ENCODE measurements at regions of chr1 and their contacts with region 1.

Region 1: GRCh38 chr1:221315330-221315729 is 426.6 kb downstream of the DUSP10 start:
- DNase-seq: peak; percentile 82
- H3K4me3 Mint-ChIP-seq: peak overlapping the region; percentile 7
- H3K27ac Mint-ChIP-seq: peak overlapping the region; percentile 59
- H3K4me1 Mint-ChIP-seq: peaks cover 29% of the 10 kb centered on the region
- H3K27me3 Mint-ChIP-seq: no peaks in the 10 kb centered on the region
- CTCF ChIP-seq: no peak

Region 2: GRCh38 chr1:220957233-220957605 is 358.1 kb before region 1 on chr1:
- CTCF ChIA-PET with region 1: interaction called, 3 read pairs
- POLR2A ChIA-PET with region 1: no interaction called
- intact Hi-C with region 1: loop called (anchors 1 kb)
- DNase-seq: peak; percentile 97
- H3K4me3 Mint-ChIP-seq: peak overlapping the region; percentile 33
- H3K27ac Mint-ChIP-seq: peak overlapping the region; percentile 89
- H3K4me1 Mint-ChIP-seq: peaks cover 21% of the 10 kb centered on the region
- H3K27me3 Mint-ChIP-seq: no peaks in the 10 kb centered on the region
- CTCF ChIP-seq: no peak

Region 3: GRCh38 chr1:221203224-221204054 is 111.9 kb before region 1 on chr1:
- CTCF ChIA-PET with region 1: no interaction called
- POLR2A ChIA-PET with region 1: no interaction called
- intact Hi-C with region 1: no loop called
- DNase-seq: peak; percentile 94
- H3K4me3 Mint-ChIP-seq: no peak overlapping the region
- H3K27ac Mint-ChIP-seq: no peak overlapping the region
- H3K4me1 Mint-ChIP-seq: peaks cover 6% of the 10 kb centered on the region
- H3K27me3 Mint-ChIP-seq: no peaks in the 10 kb centered on the region
- CTCF ChIP-seq: peak; percentile 99

Region 4: GRCh38 chr1:221294244-221294643 is 21.1 kb before region 1 on chr1:
- CTCF ChIA-PET with region 1: interaction called, 4 read pairs
- POLR2A ChIA-PET with region 1: interaction called, 10 read pairs
- intact Hi-C with region 1: loop called (anchors 2 kb)
- DNase-seq: peak; percentile 98
- H3K4me3 Mint-ChIP-seq: no peak overlapping the region
- H3K27ac Mint-ChIP-seq: no peak overlapping the region
- H3K4me1 Mint-ChIP-seq: no peaks in the 10 kb centered on the region
- H3K27me3 Mint-ChIP-seq: no peaks in the 10 kb centered on the region
- CTCF ChIP-seq: no peak

Region 5: DNA sequence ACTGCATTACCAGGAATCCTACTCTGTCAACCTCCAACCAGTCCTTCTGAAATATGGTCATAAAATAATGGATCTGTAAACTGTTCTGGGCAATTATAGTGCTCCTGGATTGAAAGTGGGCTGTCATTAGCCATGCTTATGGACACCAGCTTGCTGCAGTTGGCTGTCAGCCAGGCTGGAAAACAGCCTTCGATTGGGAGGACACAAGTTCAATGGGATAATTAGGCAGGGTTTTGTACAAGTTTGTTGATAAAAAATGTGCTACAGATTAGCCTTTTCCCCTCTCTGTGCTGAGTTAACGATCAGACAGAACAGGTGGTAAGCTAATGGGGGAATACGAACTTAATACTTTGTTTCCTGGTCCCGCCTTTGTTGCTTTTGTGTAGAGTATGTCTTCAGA is 12.6 kb after region 1 on chr1:
- CTCF ChIA-PET with region 1: interaction called, 5 read pairs
- POLR2A ChIA-PET with region 1: interaction called, 12 read pairs
- intact Hi-C with region 1: no loop called
- DNase-seq: no peak
- H3K4me3 Mint-ChIP-seq: no peak overlapping the region
- H3K27ac Mint-ChIP-seq: no peak overlapping the region
- H3K4me1 Mint-ChIP-seq: no peaks in the 10 kb centered on the region
- H3K27me3 Mint-ChIP-seq: no peaks in the 10 kb centered on the region
- CTCF ChIP-seq: no peak

Region 6: DNA sequence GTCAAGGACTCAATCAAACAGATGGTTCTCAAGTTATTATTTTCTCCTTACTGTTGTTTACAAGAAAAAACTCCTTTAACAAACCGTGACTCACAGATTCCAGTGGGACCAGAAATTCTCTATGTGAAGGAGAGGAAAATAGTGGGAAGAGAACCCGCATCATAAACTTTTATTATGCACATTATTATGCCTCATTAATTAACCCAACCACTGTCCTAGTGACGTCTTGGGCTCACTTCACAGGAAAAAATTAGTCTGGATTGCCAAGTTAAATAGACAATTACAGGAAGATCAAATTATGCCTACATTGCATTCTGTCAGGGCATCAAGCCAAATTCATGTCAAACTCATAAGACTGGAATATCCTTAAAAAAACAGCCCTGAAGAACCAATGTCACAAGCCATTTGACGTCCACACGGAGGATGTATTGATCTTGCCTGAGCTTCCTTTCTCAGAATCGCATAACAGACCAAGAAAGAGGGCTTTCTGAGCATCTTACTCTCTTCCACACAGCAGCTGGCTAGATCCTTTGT is 78.7 kb after region 1 on chr1:
- CTCF ChIA-PET with region 1: no interaction called
- POLR2A ChIA-PET with region 1: interaction called, 5 read pairs
- intact Hi-C with region 1: loop called (anchors 1 kb)
- DNase-seq: peak; percentile 88
- H3K4me3 Mint-ChIP-seq: no peak overlapping the region
- H3K27ac Mint-ChIP-seq: peak overlapping the region; percentile 55
- H3K4me1 Mint-ChIP-seq: peaks cover 50% of the 10 kb centered on the region
- H3K27me3 Mint-ChIP-seq: no peaks in the 10 kb centered on the region
- CTCF ChIP-seq: no peak

Region 7: DNA sequence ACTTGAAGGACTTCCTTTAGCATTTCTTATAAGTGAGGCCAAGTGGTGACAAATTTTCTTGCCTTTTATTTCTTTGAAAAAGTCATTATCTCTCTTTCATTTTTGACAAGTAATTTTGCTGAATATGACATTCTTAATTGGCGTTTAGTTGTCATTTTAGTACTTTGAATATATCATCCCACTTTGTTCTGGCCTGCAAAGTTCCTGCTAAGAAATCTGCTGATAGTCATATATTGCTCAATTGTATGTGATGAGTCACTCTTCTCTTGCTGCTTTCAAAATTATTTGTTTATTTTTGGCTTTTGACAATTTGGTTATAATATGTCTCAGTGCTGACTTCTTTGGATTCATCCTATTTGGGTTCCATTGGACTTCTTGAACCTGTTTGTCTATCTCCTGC is 113.9 kb after region 1 on chr1:
- CTCF ChIA-PET with region 1: interaction called, 9 read pairs
- POLR2A ChIA-PET with region 1: interaction called, 8 read pairs
- intact Hi-C with region 1: loop called (anchors 5 kb)
- DNase-seq: peak; percentile 83
- H3K4me3 Mint-ChIP-seq: no peak overlapping the region
- H3K27ac Mint-ChIP-seq: peak overlapping the region; percentile 54
- H3K4me1 Mint-ChIP-seq: peaks cover 15% of the 10 kb centered on the region
- H3K27me3 Mint-ChIP-seq: no peaks in the 10 kb centered on the region
- CTCF ChIP-seq: no peak